HCT116 (cell line): ENCODE measurements at regions of chr11 and their contacts with region 1.

Region 1: DNA sequence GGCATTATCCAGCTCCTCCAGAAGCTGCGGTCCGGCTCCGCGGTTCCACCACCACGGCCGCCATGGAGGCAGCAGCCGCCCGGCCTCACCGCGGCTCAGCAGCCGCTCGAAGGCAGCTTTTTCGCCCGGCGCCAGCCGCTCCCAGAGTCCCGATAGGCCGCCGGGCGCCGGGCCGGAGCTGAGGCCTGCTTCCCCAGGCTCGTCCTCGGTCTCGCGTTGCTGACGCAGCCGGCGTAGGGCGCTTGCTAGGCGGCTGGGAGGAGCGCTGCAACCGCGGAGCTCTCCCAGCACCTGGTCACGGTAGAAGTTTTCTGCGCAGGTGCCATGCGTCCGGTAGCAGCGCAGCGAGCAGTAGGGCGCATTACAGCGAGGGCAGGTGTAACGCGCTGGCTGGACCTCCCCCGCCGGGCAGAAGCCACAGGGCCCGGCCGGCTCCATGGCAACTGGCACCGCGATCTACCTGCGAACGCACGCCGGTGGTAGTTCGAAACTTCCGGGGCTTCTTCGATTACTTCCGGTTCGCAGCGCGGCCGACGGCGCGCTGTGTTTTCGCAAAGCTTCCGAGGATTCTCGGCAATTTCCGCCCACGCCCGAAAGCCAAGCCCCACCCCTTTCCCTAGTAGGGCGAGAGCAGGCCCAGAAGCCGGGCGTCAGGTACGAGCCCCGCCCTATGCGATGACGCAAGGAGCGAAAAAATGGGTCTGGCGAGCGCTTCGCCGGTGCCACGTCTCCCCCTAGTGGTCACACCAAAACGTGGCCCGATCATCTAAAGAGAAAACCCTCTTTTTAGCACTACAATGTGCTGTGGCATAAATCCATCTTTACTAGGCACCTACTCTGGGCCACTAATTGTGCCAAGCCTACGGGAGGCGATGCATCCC is at the start of gene ZNHIT2:
- DNase-seq: peak; percentile 98
- ATAC-seq: peak; percentile 70
- H3K4me3 ChIP-seq: peak within 1 kb of the TSS; percentile 88 to 90
- H3K27ac ChIP-seq: peak within 1 kb of the TSS; percentile 95
- H3K4me1 ChIP-seq: peaks cover 17 to 45% of the 10 kb centered on the region in 2 experiments; a peak in 3 of 4 replicates
- H3K27me3 ChIP-seq: no peaks in the 10 kb centered on the region
- CTCF ChIP-seq: peak in 2 of 3 experiments; percentile 83 to 93; a peak in 4 of 6 replicates
- POLR2A ChIP-seq: peak; percentile 87
- RAD21 ChIP-seq: no peak
- total RNA-seq, gene ZNHIT2: 18.8 TPM

Region 2: GRCh38 chr11:64810271-64810890 is 307.1 kb before region 1 on chr11 and contains the start of gene MEN1:
- CTCF ChIA-PET with region 1: no interaction called
- POLR2A ChIA-PET with region 1: no interaction called
- RAD21 ChIA-PET with region 1: no interaction called
- intact Hi-C with region 1: no loop called
- DNase-seq: peak; percentile 90
- ATAC-seq: peak; percentile 97
- H3K4me3 ChIP-seq: peak within 1 kb of the TSS; percentile 89 to 91
- H3K27ac ChIP-seq: peak within 1 kb of the TSS; percentile 65
- H3K4me1 ChIP-seq: peaks cover 7 to 18% of the 10 kb centered on the region in 2 experiments
- H3K27me3 ChIP-seq: no peaks in the 10 kb centered on the region
- CTCF ChIP-seq: no peak
- POLR2A ChIP-seq: peak; percentile 70
- RAD21 ChIP-seq: no peak
- total RNA-seq, gene MEN1: 62.1 TPM

Region 3: DNA sequence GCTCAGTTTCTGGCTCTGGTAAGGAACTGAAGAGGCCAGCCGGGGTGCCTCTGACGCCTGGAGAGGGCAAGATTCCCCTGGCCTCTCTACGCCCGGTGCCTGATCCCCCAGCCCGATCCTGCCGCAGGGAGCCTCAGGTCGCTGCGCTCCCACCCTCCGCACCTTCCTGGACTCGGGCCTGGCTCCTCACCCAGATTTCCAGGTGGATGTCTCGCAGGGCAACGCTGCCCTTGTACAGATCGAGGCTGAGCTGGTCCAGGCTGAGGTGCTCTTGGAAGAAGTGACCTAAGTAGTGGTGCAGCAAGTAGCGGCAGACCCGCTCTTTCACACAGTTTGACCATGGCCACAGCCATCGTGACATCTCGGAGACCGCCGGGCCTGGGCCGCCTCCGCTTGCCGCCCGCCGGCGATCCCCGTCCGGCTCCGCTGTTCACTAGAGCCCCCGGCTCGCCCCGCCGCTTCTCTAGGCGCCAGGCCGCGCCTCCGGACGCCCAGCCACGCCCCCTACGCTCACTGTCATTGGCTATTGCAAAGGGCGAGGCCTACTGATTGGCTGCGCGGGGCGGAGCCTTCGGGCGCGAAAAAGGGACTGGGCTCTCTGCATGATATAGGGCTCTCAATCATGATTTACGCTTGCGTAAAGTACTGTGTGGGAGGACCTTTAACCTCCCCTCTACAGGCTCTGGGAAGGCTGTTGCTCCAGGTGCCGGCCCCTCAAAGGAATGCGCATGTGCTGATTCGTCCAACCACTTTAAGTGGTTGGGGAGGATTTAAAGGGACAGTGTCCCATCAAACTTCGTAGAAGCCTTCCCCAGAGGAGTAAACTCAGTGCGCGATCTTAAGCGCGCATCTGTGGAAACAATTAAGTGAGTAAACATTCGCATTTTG is 200.4 kb before region 1 on chr11 and contains the start of gene ATG2A:
- CTCF ChIA-PET with region 1: no interaction called
- POLR2A ChIA-PET with region 1: interaction called, 3 read pairs
- RAD21 ChIA-PET with region 1: interaction called in 1 of 2 experiments, 3 read pairs
- intact Hi-C with region 1: loop called (anchors 10 kb)
- DNase-seq: peak; percentile 99
- ATAC-seq: peak; percentile 97
- H3K4me3 ChIP-seq: peak within 1 kb of the TSS; percentile 82 to 84
- H3K27ac ChIP-seq: peak within 1 kb of the TSS; percentile 69
- H3K4me1 ChIP-seq: peaks cover 16 to 29% of the 10 kb centered on the region in 2 experiments
- H3K27me3 ChIP-seq: no peaks in the 10 kb centered on the region
- CTCF ChIP-seq: no peak
- POLR2A ChIP-seq: peak; percentile 37
- RAD21 ChIP-seq: no peak
- total RNA-seq, gene ATG2A: 24.7 TPM